ENCODE measurements at regions of chr1 and their contacts with region 1.

Region 1: DNA sequence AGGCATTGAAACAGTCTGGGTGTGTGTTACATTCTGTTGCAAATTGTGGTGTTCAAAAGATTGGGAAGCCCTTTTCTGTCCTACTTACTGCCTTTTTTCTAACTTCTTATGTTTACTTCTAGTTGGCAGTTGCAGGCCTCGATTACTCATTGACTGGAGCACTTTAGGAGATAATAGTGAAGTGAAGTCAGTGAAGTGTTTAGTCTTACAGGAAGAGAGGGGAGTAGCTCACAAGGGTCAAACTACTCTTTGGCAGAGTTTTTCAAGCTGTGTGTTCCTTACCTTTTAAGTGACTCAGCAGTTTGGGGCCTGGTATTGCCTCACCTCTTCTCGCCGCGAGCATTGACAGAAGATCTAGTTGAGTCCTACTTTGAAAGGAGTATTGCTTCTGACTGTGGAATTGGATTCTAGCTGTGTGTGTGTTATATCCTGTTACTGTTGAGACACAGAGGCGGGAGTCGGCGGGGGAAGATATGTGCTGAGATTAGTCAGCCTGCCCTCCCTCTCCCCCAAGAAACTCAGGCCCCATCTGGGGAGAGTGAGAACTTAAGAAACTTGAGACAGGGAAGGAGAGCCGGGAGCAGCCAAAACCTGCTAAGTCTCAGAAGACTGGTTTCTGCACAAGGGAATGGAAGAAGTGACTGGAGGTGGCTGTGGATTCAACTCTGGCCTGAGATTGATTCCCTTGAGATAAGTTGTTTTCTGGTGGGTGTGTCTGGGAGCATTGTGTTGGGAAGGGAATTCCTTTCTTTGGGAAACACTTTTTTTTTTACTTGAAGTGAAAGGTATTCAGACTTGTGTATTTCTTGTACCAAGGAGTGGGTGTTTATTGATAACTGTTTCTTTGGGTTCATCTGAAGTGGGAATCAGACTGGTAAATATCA is 19.4 kb downstream of the AHCYL1 start:
- DNase-seq: peak; percentile 70
- H3K4me3 Mint-ChIP-seq: peak overlapping the region; percentile 44
- H3K27ac Mint-ChIP-seq: peak overlapping the region; percentile 35
- H3K4me1 Mint-ChIP-seq: peaks cover 22% of the 10 kb centered on the region
- H3K27me3 Mint-ChIP-seq: no peaks in the 10 kb centered on the region

Region 2: GRCh38 chr1:109438798-109439297 is 565.1 kb before region 1 on chr1:
- intact Hi-C with region 1: no loop called
- DNase-seq: no peak
- H3K4me3 Mint-ChIP-seq: no peak overlapping the region
- H3K27ac Mint-ChIP-seq: no peak overlapping the region
- H3K4me1 Mint-ChIP-seq: no peaks in the 10 kb centered on the region
- H3K27me3 Mint-ChIP-seq: peaks cover 2% of the 10 kb centered on the region

Region 3: GRCh38 chr1:109687616-109688499 is 316.1 kb before region 1 on chr1 and contains the start of gene GSTM1:
- intact Hi-C with region 1: no loop called
- DNase-seq: peak; percentile 97
- H3K4me3 Mint-ChIP-seq: peak within 1 kb of the TSS; percentile 87
- H3K27ac Mint-ChIP-seq: peak within 1 kb of the TSS; percentile 94
- H3K4me1 Mint-ChIP-seq: peaks cover 22% of the 10 kb centered on the region
- H3K27me3 Mint-ChIP-seq: no peaks in the 10 kb centered on the region
- total RNA-seq, gene GSTM1: 92.2 and 94.2 TPM in 2 replicates

Region 4: DNA sequence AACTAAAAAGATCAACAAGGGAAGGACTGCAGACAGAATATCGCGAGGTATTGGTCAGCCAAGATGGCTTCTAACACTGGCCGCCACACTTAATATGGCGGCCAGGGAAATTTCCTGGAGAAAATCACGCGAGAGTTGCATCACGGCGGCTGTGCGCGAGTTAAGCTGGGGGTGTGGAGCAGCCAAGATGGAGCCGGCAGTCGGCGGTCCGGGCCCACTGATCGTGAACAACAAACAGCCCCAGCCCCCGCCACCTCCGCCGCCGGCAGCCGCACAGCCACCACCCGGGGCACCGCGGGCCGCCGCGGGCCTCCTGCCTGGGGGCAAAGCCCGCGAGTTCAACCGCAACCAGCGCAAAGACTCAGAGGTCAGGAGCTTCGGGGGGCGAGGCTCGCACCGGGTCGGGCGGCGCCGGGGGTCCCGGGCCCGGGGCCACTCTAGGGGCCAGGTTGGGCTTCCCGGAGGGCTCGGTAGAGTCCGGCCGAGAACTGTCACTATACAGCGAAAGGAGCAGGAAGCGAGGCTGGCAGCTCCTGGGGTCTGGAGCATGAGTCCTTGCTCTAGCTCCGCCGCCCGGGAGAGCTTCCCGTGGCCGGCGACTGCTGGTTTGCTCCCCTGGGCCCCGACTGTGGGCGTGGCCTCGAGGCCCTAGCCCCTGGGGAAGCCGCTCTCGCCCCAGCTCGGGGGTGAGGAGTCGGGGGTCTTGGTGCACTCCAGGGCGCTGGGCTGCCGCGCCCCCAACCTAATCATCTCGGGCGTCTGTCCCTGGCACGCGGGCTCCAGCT is 30.7 kb after region 1 on chr1 and contains the start of gene STRIP1:
- intact Hi-C with region 1: loop called (anchors 2 kb)
- DNase-seq: peak; percentile 98
- H3K4me3 Mint-ChIP-seq: peak within 1 kb of the TSS; percentile 97
- H3K27ac Mint-ChIP-seq: peak within 1 kb of the TSS; percentile 86
- H3K4me1 Mint-ChIP-seq: peaks cover 46% of the 10 kb centered on the region
- H3K27me3 Mint-ChIP-seq: no peaks in the 10 kb centered on the region
- total RNA-seq, gene STRIP1: 41.0 and 43.8 TPM in 2 replicates

Measured in activated CD4-positive, alpha-beta T cell treated with anti-CD3 and anti-CD28 coated beads, Interleukin-2, amount 10 ng/mL, durations not matched to agents 24 days and 14 days (primary cell).